K562 (cell line): ENCODE measurements at regions of chr20 and their contacts with region 1.

Region 1: GRCh38 chr20:48597405-48598302 is 230.1 kb downstream of the PREX1 start:
- DNase-seq: no peak
- ATAC-seq: peak; percentile 45
- H3K4me3 ChIP-seq: no peak overlapping the region
- H3K27ac ChIP-seq: no peak overlapping the region
- H3K4me1 ChIP-seq: no peaks in the 10 kb centered on the region
- H3K27me3 ChIP-seq: peaks cover 0 to 32% of the 10 kb centered on the region in 2 experiments; a peak in 4 of 5 replicates
- CTCF ChIP-seq: no peak
- EP300 ChIP-seq: no peak
- POLR2A ChIP-seq: no peak
- RAD21 ChIP-seq: no peak

Region 2: GRCh38 chr20:48210155-48211027 is 387.3 kb before region 1 on chr20:
- CTCF ChIA-PET with region 1: no interaction called
- POLR2A ChIA-PET with region 1: no interaction called
- in situ Hi-C with region 1: loop called (anchors 5 kb)
- intact Hi-C with region 1: no loop called
- DNase-seq: no peak
- ATAC-seq: no peak
- H3K4me3 ChIP-seq: no peak overlapping the region
- H3K27ac ChIP-seq: no peak overlapping the region
- H3K4me1 ChIP-seq: no peaks in the 10 kb centered on the region
- H3K27me3 ChIP-seq: peaks cover 0 to 5% of the 10 kb centered on the region in 2 experiments; a peak in 1 of 5 replicates
- CTCF ChIP-seq: no peak
- EP300 ChIP-seq: no peak
- POLR2A ChIP-seq: no peak
- RAD21 ChIP-seq: no peak

Region 3: DNA sequence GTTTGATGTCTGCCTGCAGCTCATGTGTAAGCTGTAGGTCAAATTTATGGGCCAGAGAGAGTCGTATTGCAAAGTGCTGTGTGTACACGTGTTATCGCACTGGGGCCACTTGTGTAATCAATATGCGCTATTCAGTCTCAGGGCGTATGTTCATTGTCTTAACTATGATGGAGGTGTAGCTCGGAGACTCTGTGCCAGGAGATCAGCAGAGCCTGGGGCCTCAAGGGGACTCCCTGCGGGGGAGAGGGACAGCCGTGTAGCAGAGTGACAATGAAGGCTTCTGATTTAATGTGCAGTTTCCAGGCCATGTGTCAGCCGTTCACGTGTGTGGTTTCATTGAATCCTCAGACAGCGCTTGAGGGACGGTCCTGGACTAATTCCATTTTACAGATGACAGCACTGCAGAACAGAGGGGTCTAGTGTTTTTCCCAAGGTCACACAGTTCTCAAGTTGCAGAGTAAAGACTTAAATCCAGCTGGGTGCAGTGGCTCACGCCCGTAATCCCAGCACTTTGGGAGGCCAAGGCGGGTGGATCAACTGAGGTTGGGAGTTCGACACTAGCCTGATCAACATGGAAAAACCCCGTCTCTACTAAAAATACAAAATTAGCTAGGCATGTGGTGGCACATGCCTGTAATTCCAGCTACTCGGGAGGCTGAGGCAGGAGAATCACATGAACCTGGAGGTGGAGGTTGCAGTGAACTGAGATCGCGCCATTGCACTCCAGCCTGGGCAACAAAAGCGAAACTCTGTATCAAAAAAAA is 12.4 kb before region 1 on chr20:
- CTCF ChIA-PET with region 1: no interaction called
- POLR2A ChIA-PET with region 1: no interaction called
- in situ Hi-C with region 1: no loop called
- intact Hi-C with region 1: no loop called
- DNase-seq: no peak
- ATAC-seq: no peak
- H3K4me3 ChIP-seq: no peak overlapping the region
- H3K27ac ChIP-seq: no peak overlapping the region
- H3K4me1 ChIP-seq: no peaks in the 10 kb centered on the region; a peak in 1 of 5 replicates
- H3K27me3 ChIP-seq: peaks cover 18 to 42% of the 10 kb centered on the region in 2 experiments
- CTCF ChIP-seq: no peak
- EP300 ChIP-seq: no peak
- POLR2A ChIP-seq: no peak
- RAD21 ChIP-seq: no peak